ENCODE measurements at regions of chr2 and their contacts with region 1.

Region 1: DNA sequence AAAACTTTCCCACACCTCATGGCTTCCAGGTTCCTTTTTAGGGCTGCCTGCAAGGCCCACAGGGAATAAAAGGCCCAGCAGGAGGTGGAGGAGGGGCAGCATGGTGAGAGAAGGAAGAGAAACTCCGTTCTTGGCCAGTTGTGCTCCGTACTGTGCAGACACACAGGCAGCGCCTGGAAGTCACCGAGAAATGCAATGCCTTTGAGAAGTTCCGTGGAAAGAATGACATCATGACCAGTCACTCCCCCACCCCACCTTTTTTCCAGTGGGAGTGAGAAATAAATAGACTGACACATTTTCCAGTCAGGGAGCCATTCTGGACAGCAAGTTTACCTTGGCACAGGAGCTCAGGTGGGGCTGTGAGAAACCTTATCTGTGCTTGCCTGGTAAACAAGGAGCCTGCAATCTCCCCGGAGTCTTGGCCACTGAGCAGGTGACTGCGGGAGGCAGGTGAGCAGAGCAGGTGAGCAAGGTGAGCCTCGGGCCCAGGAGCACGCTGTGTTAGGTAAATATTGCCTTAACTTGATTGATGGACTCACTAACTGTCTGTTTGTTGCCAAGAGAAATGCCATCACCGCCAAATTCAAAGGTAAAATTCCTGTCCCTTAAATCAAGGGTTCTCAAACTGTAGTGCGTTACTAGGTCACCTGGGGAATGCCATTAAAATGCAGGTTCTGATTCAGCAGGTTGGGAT is 13.5 kb upstream of the LBH start:
- DNase-seq: no peak
- ATAC-seq: no peak
- H3K4me3 ChIP-seq: no peak overlapping the region
- H3K27ac ChIP-seq: no peak overlapping the region
- H3K4me1 ChIP-seq: no peaks in the 10 kb centered on the region
- H3K27me3 ChIP-seq: peaks cover 1 to 40% of the 10 kb centered on the region in 2 experiments; a peak in 4 of 5 replicates
- CTCF ChIP-seq: no peak
- EP300 ChIP-seq: no peak
- POLR2A ChIP-seq: no peak
- RAD21 ChIP-seq: no peak

Region 2: DNA sequence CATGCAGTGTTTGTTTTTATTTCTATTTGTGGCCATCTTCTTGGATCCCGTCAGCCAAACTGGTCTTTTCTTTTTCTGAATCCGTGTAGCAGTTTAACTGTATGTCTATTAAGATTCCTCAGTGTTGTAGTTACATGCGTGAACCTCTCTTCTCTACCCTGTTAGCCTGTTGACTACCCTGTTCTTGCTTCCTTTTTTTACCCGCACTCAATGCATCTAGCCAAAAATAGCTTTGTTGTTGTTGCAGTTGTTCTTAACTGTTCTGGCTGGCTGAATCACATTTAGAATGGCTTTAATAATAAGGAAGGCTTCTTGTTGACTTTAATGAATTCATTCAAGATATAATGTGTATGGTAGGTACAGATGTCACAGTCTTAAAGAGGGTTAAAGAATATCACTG is 366.3 kb after region 1 on chr2:
- CTCF ChIA-PET with region 1: no interaction called
- POLR2A ChIA-PET with region 1: no interaction called
- in situ Hi-C with region 1: no loop called
- intact Hi-C with region 1: no loop called
- DNase-seq: no peak
- ATAC-seq: no peak
- H3K4me3 ChIP-seq: no peak overlapping the region
- H3K27ac ChIP-seq: no peak overlapping the region
- H3K4me1 ChIP-seq: no peaks in the 10 kb centered on the region
- H3K27me3 ChIP-seq: no peaks in the 10 kb centered on the region; a peak in 1 of 5 replicates
- CTCF ChIP-seq: no peak
- EP300 ChIP-seq: no peak
- POLR2A ChIP-seq: no peak
- RAD21 ChIP-seq: no peak

Region 3: DNA sequence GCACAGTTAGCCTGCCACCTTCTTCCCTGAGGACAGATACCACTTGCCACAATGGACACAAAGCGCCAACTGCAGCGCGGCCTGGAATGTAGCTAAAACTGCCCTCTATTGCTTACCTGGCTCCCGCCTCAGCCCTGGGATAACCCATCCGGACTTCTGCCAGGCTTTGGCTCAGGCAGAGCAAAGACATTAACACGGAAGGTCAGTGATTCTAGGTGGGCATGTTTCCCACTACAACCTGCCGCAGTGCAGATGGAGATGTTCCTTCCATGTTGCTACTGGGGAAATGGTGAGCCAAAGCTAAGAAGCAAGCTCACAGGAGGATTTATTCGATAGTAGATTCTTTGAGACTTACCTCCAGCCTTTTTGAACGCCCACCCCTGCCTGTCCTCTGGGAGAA is 1121.9 kb after region 1 on chr2:
- CTCF ChIA-PET with region 1: no interaction called
- POLR2A ChIA-PET with region 1: no interaction called
- in situ Hi-C with region 1: loop called (anchors 25 kb)
- intact Hi-C with region 1: loop called (anchors 5 kb)
- DNase-seq: no peak
- ATAC-seq: no peak
- H3K4me3 ChIP-seq: no peak overlapping the region
- H3K27ac ChIP-seq: no peak overlapping the region
- H3K4me1 ChIP-seq: no peaks in the 10 kb centered on the region
- H3K27me3 ChIP-seq: no peaks in the 10 kb centered on the region; a peak in 2 of 5 replicates
- CTCF ChIP-seq: no peak
- EP300 ChIP-seq: no peak
- POLR2A ChIP-seq: no peak
- RAD21 ChIP-seq: no peak

Measured in HepG2 (cell line).